ENCODE measurements at regions of chr18 and their contacts with region 1.

Region 1: GRCh38 chr18:49837889-49838288 is 24.6 kb upstream of the ACAA2 start:
- DNase-seq: peak; percentile 73
- ATAC-seq: peak; percentile 76
- H3K4me3 ChIP-seq: no peak overlapping the region
- H3K27ac ChIP-seq: peak overlapping the region; percentile 32
- H3K4me1 ChIP-seq: peaks cover 63% of the 10 kb centered on the region
- H3K27me3 ChIP-seq: no peaks in the 10 kb centered on the region
- CTCF ChIP-seq: no peak
- EP300 ChIP-seq: peak; percentile 25 to 58; a peak in 2 of 4 replicates
- POLR2A ChIP-seq: no peak
- RAD21 ChIP-seq: no peak

Region 2: GRCh38 chr18:49747876-49748275 is 90.0 kb before region 1 on chr18:
- CTCF ChIA-PET with region 1: no interaction called
- POLR2A ChIA-PET with region 1: no interaction called
- in situ Hi-C with region 1: no loop called
- intact Hi-C with region 1: no loop called
- DNase-seq: no peak
- ATAC-seq: no peak
- H3K4me3 ChIP-seq: no peak overlapping the region
- H3K27ac ChIP-seq: no peak overlapping the region
- H3K4me1 ChIP-seq: no peaks in the 10 kb centered on the region; the same call in 1 of the 2 replicates
- H3K27me3 ChIP-seq: peaks cover 0 to 19% of the 10 kb centered on the region in 2 experiments; a peak in 2 of 5 replicates
- CTCF ChIP-seq: no peak
- EP300 ChIP-seq: no peak
- POLR2A ChIP-seq: no peak
- RAD21 ChIP-seq: no peak

Region 3: DNA sequence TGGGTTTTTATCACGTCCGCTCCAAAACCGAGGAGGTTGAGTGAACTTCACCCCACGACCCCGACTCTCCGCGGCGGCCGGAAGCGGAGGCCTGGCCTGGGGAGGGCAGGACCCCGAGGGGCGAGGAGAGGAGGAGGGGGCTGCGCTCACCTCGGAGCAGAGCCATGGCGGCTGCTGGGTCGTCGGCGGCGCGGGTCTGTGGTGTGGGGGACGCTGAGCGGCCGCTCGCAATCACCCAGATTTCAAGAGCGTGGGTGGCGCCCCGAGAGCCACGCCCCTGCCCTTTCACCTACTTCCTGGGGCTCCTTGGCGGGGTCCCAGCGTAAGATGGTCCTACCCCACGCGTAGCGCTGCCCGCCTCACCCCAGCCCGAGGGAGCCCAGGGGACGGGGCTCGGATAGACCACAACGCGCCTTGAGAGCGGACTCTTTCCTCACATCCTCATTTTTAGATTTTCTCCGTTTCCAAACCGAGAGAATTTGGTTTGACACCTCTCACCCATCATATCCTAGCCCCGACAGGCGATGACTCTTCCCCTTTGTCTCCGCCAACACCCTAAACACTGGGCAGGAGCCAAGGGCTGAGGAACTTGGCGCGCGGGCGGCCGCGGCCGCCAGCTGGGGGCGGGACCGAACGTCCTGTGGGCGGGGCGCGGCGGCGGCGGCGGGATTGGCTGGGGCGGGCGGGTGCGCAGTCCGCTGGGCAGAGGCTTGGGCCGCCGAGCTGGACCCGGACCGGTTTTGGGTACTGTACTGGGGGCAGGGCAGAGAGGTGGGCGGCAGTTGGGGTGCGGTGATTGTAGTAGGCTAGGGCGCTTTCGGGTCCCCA is 24.4 kb before region 1 on chr18 and contains the start of gene ACAA2:
- CTCF ChIA-PET with region 1: no interaction called
- POLR2A ChIA-PET with region 1: interaction called, 31 read pairs
- in situ Hi-C with region 1: no loop called
- intact Hi-C with region 1: loop called (anchors 2 kb)
- DNase-seq: peak; percentile 63
- ATAC-seq: peak; percentile 92
- H3K4me3 ChIP-seq: peak within 1 kb of the TSS; percentile 71 to 95 (median 88)
- H3K27ac ChIP-seq: peak within 1 kb of the TSS; percentile 96
- H3K4me1 ChIP-seq: peaks cover 39% of the 10 kb centered on the region
- H3K27me3 ChIP-seq: no peaks in the 10 kb centered on the region
- CTCF ChIP-seq: no peak; the same call in 1 of the 2 replicates
- EP300 ChIP-seq: no peak
- POLR2A ChIP-seq: peak; percentile 75 to 86
- RAD21 ChIP-seq: no peak
- total RNA-seq, gene ACAA2: 182 and 269 TPM in 2 replicates

Region 4: GRCh38 chr18:50111265-50111792 is 273.4 kb after region 1 on chr18:
- CTCF ChIA-PET with region 1: no interaction called
- POLR2A ChIA-PET with region 1: no interaction called
- in situ Hi-C with region 1: no loop called
- intact Hi-C with region 1: no loop called
- DNase-seq: no peak
- ATAC-seq: no peak
- H3K4me3 ChIP-seq: no peak overlapping the region
- H3K27ac ChIP-seq: no peak overlapping the region
- H3K4me1 ChIP-seq: peaks cover 24% of the 10 kb centered on the region
- H3K27me3 ChIP-seq: no peaks in the 10 kb centered on the region
- CTCF ChIP-seq: no peak
- EP300 ChIP-seq: no peak
- POLR2A ChIP-seq: no peak
- RAD21 ChIP-seq: no peak

Region 5: DNA sequence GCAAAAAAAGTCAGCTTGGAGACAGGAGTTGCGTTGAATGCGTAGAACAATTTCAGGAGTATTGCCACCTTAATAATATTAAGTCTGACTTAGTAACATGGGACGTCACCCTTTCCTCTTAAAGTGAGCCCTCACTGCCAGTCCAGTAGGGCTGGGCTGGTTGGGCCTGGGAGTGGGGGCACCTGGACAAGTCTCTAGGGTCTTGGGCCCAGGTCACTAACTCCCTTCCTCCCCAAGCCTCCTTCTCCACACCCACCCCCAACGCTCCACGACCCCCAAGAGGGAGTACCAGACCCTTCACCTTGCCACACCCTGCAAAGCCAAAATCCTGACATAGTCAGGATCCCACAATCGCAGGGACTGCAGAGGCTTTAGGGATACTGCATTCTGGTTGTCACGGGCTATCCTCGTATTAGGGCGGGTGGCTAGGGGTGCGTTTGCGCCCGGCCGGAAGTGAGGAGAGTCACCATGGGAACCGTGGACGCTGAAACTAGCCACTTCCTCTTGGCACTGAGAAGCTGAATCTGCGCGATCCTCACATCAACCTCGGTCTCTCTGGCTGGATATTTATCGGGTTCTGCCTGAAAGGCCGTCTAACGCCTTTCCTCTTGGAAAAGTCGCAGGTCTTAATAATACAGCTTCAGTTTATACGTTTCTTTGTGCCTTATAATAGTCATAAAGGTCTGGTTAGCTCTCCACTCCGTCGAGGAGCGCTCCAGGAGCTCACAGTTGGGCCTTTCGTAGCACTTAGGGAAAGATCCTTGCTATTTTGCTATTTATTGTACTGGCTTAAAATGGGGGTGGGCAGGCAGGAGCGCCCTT is 459.9 kb after region 1 on chr18:
- CTCF ChIA-PET with region 1: no interaction called
- POLR2A ChIA-PET with region 1: no interaction called
- in situ Hi-C with region 1: no loop called
- intact Hi-C with region 1: no loop called
- DNase-seq: no peak
- ATAC-seq: no peak
- H3K4me3 ChIP-seq: no peak overlapping the region
- H3K27ac ChIP-seq: no peak overlapping the region
- H3K4me1 ChIP-seq: no peaks in the 10 kb centered on the region
- H3K27me3 ChIP-seq: peaks cover 2 to 11% of the 10 kb centered on the region in 2 experiments; a peak in 3 of 5 replicates
- CTCF ChIP-seq: no peak
- EP300 ChIP-seq: no peak
- POLR2A ChIP-seq: no peak
- RAD21 ChIP-seq: no peak

Measured in HepG2 (cell line).